OCI-LY7 (cell line): ENCODE measurements at regions of chr4 and their contacts with region 1.

Region 1: GRCh38 chr4:140049024-140049848 is 104.7 kb downstream of the MAML3 start:
- DNase-seq: peak; percentile 74
- H3K4me3 ChIP-seq: peak overlapping the region; percentile 47
- H3K27ac ChIP-seq: no peak overlapping the region
- H3K4me1 ChIP-seq: peaks cover 32% of the 10 kb centered on the region
- CTCF ChIP-seq: no peak; the same call in 1 of the 2 replicates

Region 2: GRCh38 chr4:139978692-139979091 is 70.5 kb before region 1 on chr4:
- CTCF ChIA-PET with region 1: interaction called, 6 read pairs
- POLR2A ChIA-PET with region 1: no interaction called
- intact Hi-C with region 1: loop called (anchors 5 kb)
- DNase-seq: peak; percentile 69
- H3K4me3 ChIP-seq: no peak overlapping the region
- H3K27ac ChIP-seq: no peak overlapping the region
- H3K4me1 ChIP-seq: peaks cover 32% of the 10 kb centered on the region
- CTCF ChIP-seq: no peak

Region 3: DNA sequence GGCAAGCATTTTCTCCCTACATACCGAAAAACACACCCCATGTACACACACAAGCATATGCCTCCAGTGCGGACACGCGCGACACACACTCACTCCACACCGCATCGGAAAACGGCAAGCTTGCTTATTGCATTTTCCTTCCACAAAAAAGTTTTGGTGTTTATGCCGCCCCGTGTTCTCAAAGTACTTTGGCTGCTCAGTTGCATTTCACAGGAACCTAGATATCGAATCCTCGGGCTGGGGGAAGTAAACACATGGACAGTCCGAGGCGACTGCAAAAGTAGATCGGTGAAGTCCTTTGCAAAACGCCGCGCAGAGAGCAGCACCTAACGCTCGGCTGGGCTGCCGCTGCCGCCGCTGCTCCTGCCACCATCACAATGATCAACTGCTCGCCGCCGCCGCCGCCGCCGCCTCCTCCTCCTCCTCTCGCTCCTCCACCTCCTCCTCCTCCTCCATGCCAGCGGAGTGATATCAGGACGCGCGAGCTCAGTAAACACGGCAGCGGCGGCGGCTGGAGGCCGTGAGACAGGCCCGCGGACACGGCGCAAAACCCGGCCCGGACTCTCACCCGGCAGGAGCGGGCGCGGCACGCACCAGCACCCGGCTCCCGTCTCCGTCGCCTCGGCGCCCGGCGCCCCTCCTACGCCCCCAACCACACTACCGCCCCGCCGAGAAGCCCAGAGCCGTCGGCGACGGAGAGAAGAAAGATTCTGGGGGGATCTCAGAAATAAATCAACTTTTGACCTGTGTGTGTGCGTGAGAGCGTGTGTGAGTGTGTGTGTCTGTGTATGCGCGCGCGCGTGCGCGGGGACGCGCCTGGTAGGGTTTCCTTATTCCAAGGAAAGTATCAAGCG is 104.7 kb after region 1 on chr4 and contains the start of gene MAML3:
- CTCF ChIA-PET with region 1: no interaction called
- POLR2A ChIA-PET with region 1: no interaction called
- intact Hi-C with region 1: loop called (anchors 5 kb)
- DNase-seq: peak; percentile 91
- H3K4me3 ChIP-seq: peak within 1 kb of the TSS; percentile 72
- H3K27ac ChIP-seq: peak within 1 kb of the TSS; percentile 52
- H3K4me1 ChIP-seq: peaks cover 59% of the 10 kb centered on the region
- CTCF ChIP-seq: no peak
- total RNA-seq, gene MAML3: 1.2 and 1.8 TPM in 2 replicates